ENCODE measurements at regions of chr7 and their contacts with region 1.

Region 1: DNA sequence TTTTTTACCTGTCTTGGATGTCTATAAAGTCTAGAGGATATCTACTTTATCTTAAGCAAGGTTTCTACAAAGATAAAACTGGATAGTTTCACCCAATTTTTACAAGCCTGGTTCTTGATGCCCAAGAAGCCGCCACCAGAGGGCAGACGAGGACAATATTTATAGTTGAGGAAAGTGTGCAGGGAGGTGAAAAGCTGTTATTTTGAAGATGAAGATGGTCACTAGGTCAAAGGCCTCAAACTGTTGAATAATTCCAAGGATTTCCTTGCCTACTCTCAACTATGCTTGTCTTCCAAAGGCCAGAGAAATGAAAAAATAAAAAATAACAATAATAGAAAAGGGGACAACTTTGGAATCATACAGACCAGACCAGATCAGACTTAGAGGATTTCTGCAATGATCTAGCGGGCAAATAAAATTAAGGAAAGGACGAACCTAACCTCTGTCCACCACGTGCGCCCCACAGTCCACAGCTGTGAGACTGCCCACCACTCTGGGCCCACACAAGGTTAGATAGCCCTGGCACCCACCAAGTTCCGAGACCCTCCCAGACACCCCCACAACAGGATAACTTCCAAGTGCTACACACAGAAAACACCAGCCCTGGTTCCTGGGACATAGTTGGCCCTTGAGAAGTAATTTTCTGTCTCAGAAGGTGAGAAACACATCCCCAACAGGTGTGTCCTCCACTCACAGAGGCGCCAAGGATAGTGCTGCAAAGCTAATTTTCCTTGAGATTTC is 2.8 kb downstream of the PKD1L1 start:
- DNase-seq: peak; percentile 53 to 62 (median 61)
- H3K4me3 ChIP-seq: no peak overlapping the region
- H3K4me3 Mint-ChIP-seq: no peak overlapping the region
- H3K27ac ChIP-seq: no peak overlapping the region
- H3K27ac Mint-ChIP-seq: no peak overlapping the region
- H3K4me1 ChIP-seq: no peaks in the 10 kb centered on the region
- H3K4me1 Mint-ChIP-seq: peaks cover 0 to 3% (median 0%) of the 10 kb centered on the region in 4 donors
- H3K27me3 ChIP-seq: no peaks in the 10 kb centered on the region
- H3K27me3 Mint-ChIP-seq: no peaks in the 10 kb centered on the region

Region 2: GRCh38 chr7:47047384-47047783 is 898.0 kb before region 1 on chr7:
- CTCF ChIA-PET with region 1: no interaction called
- POLR2A ChIA-PET with region 1: no interaction called
- intact Hi-C with region 1: no loop called
- DNase-seq: no peak
- H3K4me3 ChIP-seq: no peak overlapping the region
- H3K4me3 Mint-ChIP-seq: no peak overlapping the region
- H3K27ac ChIP-seq: no peak overlapping the region
- H3K27ac Mint-ChIP-seq: no peak overlapping the region
- H3K4me1 ChIP-seq: no peaks in the 10 kb centered on the region
- H3K4me1 Mint-ChIP-seq: no peaks in the 10 kb centered on the region
- H3K27me3 ChIP-seq: no peaks in the 10 kb centered on the region
- H3K27me3 Mint-ChIP-seq: no peaks in the 10 kb centered on the region

Region 3: GRCh38 chr7:47833211-47833610 is 112.2 kb before region 1 on chr7:
- CTCF ChIA-PET with region 1: no interaction called
- POLR2A ChIA-PET with region 1: no interaction called
- intact Hi-C with region 1: no loop called
- DNase-seq: no peak
- H3K4me3 ChIP-seq: no peak overlapping the region
- H3K4me3 Mint-ChIP-seq: no peak overlapping the region
- H3K27ac ChIP-seq: no peak overlapping the region
- H3K27ac Mint-ChIP-seq: no peak overlapping the region
- H3K4me1 ChIP-seq: no peaks in the 10 kb centered on the region
- H3K4me1 Mint-ChIP-seq: no peaks in the 10 kb centered on the region
- H3K27me3 ChIP-seq: no peaks in the 10 kb centered on the region
- H3K27me3 Mint-ChIP-seq: no peaks in the 10 kb centered on the region

Region 4: DNA sequence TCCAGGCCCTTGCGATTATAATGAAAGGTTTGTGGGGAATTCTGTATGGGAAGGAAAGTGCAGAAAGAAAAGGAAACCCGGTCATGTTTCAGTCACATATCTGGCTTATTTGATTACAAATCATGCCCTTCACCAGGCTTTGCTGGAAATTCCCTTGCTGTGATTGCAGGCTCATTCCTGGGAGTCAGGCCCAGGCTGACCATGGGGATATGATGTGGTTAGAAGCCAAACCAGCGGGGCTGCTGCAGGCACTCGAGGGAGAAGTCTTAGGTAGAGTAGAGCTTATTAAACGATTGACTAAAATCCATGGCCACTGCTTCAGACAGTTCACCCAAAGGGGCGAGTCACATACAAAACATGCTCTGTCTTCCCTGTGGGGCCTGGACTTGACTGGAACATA is 13.4 kb before region 1 on chr7:
- CTCF ChIA-PET with region 1: interaction called, 13 read pairs
- POLR2A ChIA-PET with region 1: no interaction called
- intact Hi-C with region 1: no loop called
- DNase-seq: no peak
- H3K4me3 ChIP-seq: no peak overlapping the region
- H3K4me3 Mint-ChIP-seq: no peak overlapping the region
- H3K27ac ChIP-seq: no peak overlapping the region
- H3K27ac Mint-ChIP-seq: no peak overlapping the region
- H3K4me1 ChIP-seq: no peaks in the 10 kb centered on the region
- H3K4me1 Mint-ChIP-seq: no peaks in the 10 kb centered on the region
- H3K27me3 ChIP-seq: no peaks in the 10 kb centered on the region
- H3K27me3 Mint-ChIP-seq: no peaks in the 10 kb centered on the region

Region 5: GRCh38 chr7:48154792-48155413 is 209.5 kb after region 1 on chr7:
- CTCF ChIA-PET with region 1: interaction called, 39 read pairs
- POLR2A ChIA-PET with region 1: interaction called, 4 read pairs
- intact Hi-C with region 1: no loop called
- DNase-seq: peak; percentile 24 to 42 (median 30)
- H3K4me3 ChIP-seq: no peak overlapping the region
- H3K4me3 Mint-ChIP-seq: no peak overlapping the region
- H3K27ac ChIP-seq: no peak overlapping the region
- H3K27ac Mint-ChIP-seq: no peak overlapping the region
- H3K4me1 ChIP-seq: no peaks in the 10 kb centered on the region
- H3K4me1 Mint-ChIP-seq: no peaks in the 10 kb centered on the region
- H3K27me3 ChIP-seq: no peaks in the 10 kb centered on the region
- H3K27me3 Mint-ChIP-seq: peaks cover 11 to 26% of the 10 kb centered on the region in 2 donors